Breast epithelium (tissue), 4 donors: ENCODE measurements at regions of chr4 and their contacts with region 1.

Region 1: GRCh38 chr4:1967512-1968149 is 41.1 kb downstream of the NELFA start:
- DNase-seq: no peak
- H3K4me3 ChIP-seq: no peak overlapping the region
- H3K27ac ChIP-seq: no peak overlapping the region
- H3K4me1 ChIP-seq: no peaks in the 10 kb centered on the region
- H3K27me3 ChIP-seq: no peaks in the 10 kb centered on the region
- CTCF ChIP-seq: no peak
- POLR2A ChIP-seq: no peak

Region 2: DNA sequence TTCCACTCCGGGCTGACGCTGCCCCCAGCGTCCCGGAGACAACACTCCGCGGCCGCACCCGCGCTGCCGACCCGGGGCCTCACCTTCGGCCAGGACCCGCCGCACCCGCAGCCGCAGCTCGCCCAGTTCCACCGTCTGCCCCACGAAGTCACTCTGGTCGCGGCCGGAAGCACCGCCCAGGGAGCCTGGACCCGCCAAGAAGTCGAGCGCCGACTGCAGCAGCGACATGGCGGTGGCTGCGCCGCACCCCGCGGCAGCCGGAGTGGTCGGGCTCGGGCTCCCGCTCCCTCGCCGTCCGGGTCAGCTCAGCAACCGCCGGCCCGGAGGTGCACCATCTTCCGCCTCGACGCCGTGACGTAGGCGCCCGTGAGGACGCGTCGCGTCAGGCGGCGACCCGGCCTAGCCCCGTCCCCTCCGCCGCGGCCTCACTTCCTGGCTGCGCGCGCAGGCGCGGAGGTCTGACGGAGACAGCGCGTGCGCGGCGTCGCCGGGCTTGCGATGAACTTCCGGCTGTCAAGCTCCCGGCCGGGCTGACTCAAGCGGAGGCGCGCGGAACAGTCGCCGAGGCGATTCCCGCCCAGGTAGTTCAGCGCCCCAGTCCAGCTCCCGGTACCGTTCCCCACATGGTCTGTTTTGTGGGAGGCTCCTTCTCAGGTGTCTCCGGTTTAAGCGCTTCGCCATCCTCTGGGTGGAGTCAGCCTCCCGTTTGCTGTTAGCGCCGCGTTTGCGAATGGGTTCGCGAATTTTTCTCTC is 1035.5 kb before region 1 on chr4 and contains the starts of genes GAK and TMEM175:
- intact Hi-C with region 1: loop called (anchors 5 kb)
- DNase-seq: peak; percentile 95
- H3K4me3 ChIP-seq: peak within 1 kb of the TSS; percentile 82 to 99 (median 96)
- H3K27ac ChIP-seq: peak within 1 kb of the TSS; percentile 89 to 90
- H3K4me1 ChIP-seq: peaks cover 3 to 13% of the 10 kb centered on the region in 2 donors
- H3K27me3 ChIP-seq: no peaks in the 10 kb centered on the region
- CTCF ChIP-seq: peak in 2 of 3 donors; percentile 7 to 21
- POLR2A ChIP-seq: peak; percentile 16
- total RNA-seq, gene GAK: 76.2 to 95.7 (median 81.9) TPM
- total RNA-seq, gene TMEM175: 26.2 to 32.2 (median 28.2) TPM

Region 3: GRCh38 chr4:2843263-2843940 is 875.8 kb after region 1 on chr4 and contains the start of gene ADD1:
- intact Hi-C with region 1: no loop called
- DNase-seq: peak; percentile 87 to 90
- H3K4me3 ChIP-seq: peak within 1 kb of the TSS; percentile 74 to 82 (median 78)
- H3K27ac ChIP-seq: peak within 1 kb of the TSS; percentile 93
- H3K4me1 ChIP-seq: peaks cover 0 to 4% of the 10 kb centered on the region in 2 donors
- H3K27me3 ChIP-seq: no peaks in the 10 kb centered on the region
- CTCF ChIP-seq: peak in 1 of 3 donors; percentile 8
- POLR2A ChIP-seq: peak; percentile 70
- total RNA-seq, gene ADD1: 161 to 193 (median 181) TPM